ENCODE measurements at regions of chr17 and their contacts with region 1.

Region 1: GRCh38 chr17:8441690-8442089 is 6.0 kb downstream of the NDEL1 start:
- DNase-seq: no peak
- H3K4me3 Mint-ChIP-seq: no peak overlapping the region
- H3K27ac Mint-ChIP-seq: peak overlapping the region; percentile 59
- H3K4me1 Mint-ChIP-seq: peaks cover 35% of the 10 kb centered on the region
- H3K27me3 Mint-ChIP-seq: no peaks in the 10 kb centered on the region

Region 2: DNA sequence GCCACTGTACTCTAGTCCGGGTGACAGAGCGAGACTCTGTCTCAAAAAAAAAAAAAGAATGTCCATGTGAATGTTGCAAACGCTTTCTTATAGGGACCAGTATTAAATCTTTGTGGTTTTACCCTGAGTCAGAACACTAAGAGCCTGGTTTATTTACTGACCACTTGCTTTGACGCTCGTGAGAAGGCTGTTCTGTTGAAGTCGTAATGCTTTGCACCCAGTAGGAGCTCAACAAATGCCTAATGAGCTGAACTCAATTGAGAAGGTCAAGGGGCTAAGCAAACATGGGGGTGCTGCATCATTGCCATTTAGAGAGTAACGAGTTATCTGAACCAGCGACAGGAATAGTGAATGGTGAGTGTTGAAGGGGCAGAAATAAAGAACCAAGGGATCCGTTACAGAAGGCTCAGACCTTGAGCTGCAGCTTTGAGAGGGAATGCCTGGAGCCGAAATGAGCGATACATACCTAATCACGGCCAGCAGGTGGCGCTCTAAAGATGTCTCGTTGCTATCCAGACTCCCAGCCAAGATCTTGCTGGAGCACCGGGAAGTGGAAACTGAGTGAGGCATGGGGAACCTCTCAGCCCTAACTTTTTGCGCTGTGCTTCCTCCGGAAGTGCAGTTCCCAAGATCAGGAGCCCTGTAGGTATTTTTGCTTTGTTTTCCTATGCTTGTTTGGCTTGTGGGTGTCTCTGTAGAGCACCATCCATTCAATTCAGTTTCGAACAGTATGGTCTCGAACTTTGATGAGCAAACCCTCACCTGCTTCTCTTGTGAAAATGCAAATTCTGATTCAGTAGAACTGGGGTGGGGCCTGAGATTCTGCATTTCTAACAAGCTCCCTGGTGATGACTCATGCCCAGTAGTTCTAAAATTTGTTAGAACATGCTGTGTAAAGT is 31.5 kb before region 1 on chr17:
- intact Hi-C with region 1: loop called (anchors 2 kb)
- DNase-seq: peak; percentile 66
- H3K4me3 Mint-ChIP-seq: no peak overlapping the region
- H3K27ac Mint-ChIP-seq: no peak overlapping the region
- H3K4me1 Mint-ChIP-seq: peaks cover 21% of the 10 kb centered on the region
- H3K27me3 Mint-ChIP-seq: peaks cover 34% of the 10 kb centered on the region

Measured in activated T-helper 2 cell treated with anti-CD3 and anti-CD28 coated beads, Interferon-gamma antibody, Interleukin-2, Interleukin-4, amounts not matched to agents 10 μg/mL and 5 μg/mL and 100 μg/mL, durations not matched to agents 14 hours and 24 hours and 36 hours (primary cell).